Heart right ventricle (tissue), 16 donors: ENCODE measurements at regions of chr2 and their contacts with region 1.

Region 1: DNA sequence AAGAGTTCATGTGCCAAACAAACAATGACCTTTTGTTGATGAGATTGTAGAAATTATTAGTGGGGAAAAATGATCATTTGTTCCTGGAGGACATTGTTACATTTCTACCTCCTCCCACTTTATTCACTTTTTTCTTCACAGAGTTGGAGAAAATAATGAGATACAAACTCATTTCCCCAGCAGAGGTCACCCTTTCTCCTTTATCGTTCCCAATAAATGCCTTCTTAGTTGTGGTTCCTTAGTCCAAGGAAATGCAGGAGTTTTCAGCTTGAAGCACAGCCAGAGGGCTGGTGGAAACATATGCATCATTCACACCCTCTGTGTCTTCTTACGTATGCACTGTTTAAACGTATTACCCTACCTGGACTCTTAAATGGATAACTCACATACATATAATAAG is 108.8 kb downstream of the SLC4A3 start:
- DNase-seq: peak in 1 of 2 donors; percentile 30
- ATAC-seq: peak in 7 of 8 donors; percentile 50 to 77 (median 65)
- H3K4me3 ChIP-seq: no peak overlapping the region
- H3K27ac ChIP-seq: no peak overlapping the region
- H3K4me1 ChIP-seq: peaks cover 0 to 23% (median 3%) of the 10 kb centered on the region in 9 donors
- H3K27me3 ChIP-seq: no peaks in the 10 kb centered on the region
- CTCF ChIP-seq: peak in 8 of 9 donors; percentile 18 to 70 (median 58)

Region 2: DNA sequence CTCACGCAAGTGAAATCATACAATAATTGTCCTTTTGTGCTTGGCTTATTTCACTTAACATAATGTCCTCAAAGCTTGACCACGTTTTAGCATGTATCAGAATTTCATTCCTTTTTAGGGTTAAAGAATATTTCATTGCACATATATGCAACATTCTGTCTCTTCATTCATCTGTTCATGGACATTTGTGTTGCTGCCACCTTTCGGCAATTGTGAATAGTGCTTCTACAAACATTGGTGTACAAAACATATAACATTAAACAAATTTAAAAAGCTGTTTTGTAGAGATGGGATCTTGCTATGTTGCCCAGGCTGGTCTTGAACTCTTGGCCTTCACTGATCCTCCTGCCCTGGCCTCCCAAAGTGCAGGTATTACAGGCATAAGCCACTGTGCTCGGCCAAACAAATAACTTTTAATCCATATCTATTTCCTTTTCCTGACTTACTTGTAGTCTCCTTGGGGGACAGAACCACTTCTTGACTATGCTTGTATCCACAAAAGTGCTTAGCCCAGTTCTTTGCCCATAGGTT is 100.5 kb after region 1 on chr2:
- intact Hi-C with region 1: loop called in 9 of 10 experiments (anchors 1 to 5 kb)
- DNase-seq: no peak
- ATAC-seq: no peak
- H3K4me3 ChIP-seq: no peak overlapping the region
- H3K27ac ChIP-seq: no peak overlapping the region
- H3K4me1 ChIP-seq: no peaks in the 10 kb centered on the region
- H3K27me3 ChIP-seq: no peaks in the 10 kb centered on the region
- CTCF ChIP-seq: peak; percentile 19 to 60 (median 48)

Region 3: GRCh38 chr2:220006152-220006621 is 270.0 kb after region 1 on chr2:
- intact Hi-C with region 1: loop called in 1 of 10 experiments (anchors 10 kb)
- DNase-seq: no peak
- ATAC-seq: peak in 5 of 8 donors; percentile 30 to 75 (median 55)
- H3K4me3 ChIP-seq: no peak overlapping the region
- H3K27ac ChIP-seq: no peak overlapping the region
- H3K4me1 ChIP-seq: peaks cover 0 to 7% (median 0%) of the 10 kb centered on the region in 9 donors
- H3K27me3 ChIP-seq: no peaks in the 10 kb centered on the region
- CTCF ChIP-seq: no peak